HepG2 (cell line): ENCODE measurements at regions of chr2 and their contacts with region 1.

Region 1: GRCh38 chr2:197777823-197778407 is 7.2 kb downstream of the BOLL start:
- DNase-seq: peak; percentile 28
- ATAC-seq: no peak
- H3K4me3 ChIP-seq: no peak overlapping the region
- H3K27ac ChIP-seq: no peak overlapping the region
- H3K4me1 ChIP-seq: no peaks in the 10 kb centered on the region
- H3K27me3 ChIP-seq: no peaks in the 10 kb centered on the region
- CTCF ChIP-seq: peak; percentile 75
- EP300 ChIP-seq: no peak
- POLR2A ChIP-seq: no peak
- RAD21 ChIP-seq: peak; percentile 68

Region 2: GRCh38 chr2:197011799-197012641 is 765.9 kb before region 1 on chr2:
- CTCF ChIA-PET with region 1: no interaction called
- POLR2A ChIA-PET with region 1: no interaction called
- in situ Hi-C with region 1: no loop called
- intact Hi-C with region 1: loop called (anchors 10 kb)
- DNase-seq: peak; percentile 57
- ATAC-seq: peak; percentile 97
- H3K4me3 ChIP-seq: no peak overlapping the region
- H3K27ac ChIP-seq: no peak overlapping the region
- H3K4me1 ChIP-seq: no peaks in the 10 kb centered on the region
- H3K27me3 ChIP-seq: peaks cover 0 to 8% of the 10 kb centered on the region in 2 experiments; a peak in 2 of 5 replicates
- CTCF ChIP-seq: peak; percentile 83
- EP300 ChIP-seq: no peak
- POLR2A ChIP-seq: no peak
- RAD21 ChIP-seq: peak; percentile 41; the same call in 1 of the 2 replicates

Region 3: GRCh38 chr2:197191177-197191939 is 586.6 kb before region 1 on chr2:
- CTCF ChIA-PET with region 1: interaction called, 14 read pairs
- POLR2A ChIA-PET with region 1: no interaction called
- in situ Hi-C with region 1: loop called (anchors 10 kb)
- intact Hi-C with region 1: loop called (anchors 1 kb)
- DNase-seq: peak; percentile 40
- ATAC-seq: peak; percentile 60; the same call in 2 of the 3 replicates
- H3K4me3 ChIP-seq: no peak overlapping the region
- H3K27ac ChIP-seq: no peak overlapping the region
- H3K4me1 ChIP-seq: no peaks in the 10 kb centered on the region
- H3K27me3 ChIP-seq: no peaks in the 10 kb centered on the region
- CTCF ChIP-seq: peak; percentile 66
- EP300 ChIP-seq: no peak
- POLR2A ChIP-seq: no peak
- RAD21 ChIP-seq: no peak

Region 4: GRCh38 chr2:197383823-197384222 is 394.1 kb before region 1 on chr2:
- CTCF ChIA-PET with region 1: no interaction called
- POLR2A ChIA-PET with region 1: no interaction called
- in situ Hi-C with region 1: loop called (anchors 10 kb)
- intact Hi-C with region 1: loop called (anchors 2 kb)
- DNase-seq: no peak
- ATAC-seq: peak; percentile 57
- H3K4me3 ChIP-seq: no peak overlapping the region
- H3K27ac ChIP-seq: no peak overlapping the region
- H3K4me1 ChIP-seq: 0 out of 2 replicates have a peak, but pooled peaks cover 2% of the 10 kb centered on the region
- H3K27me3 ChIP-seq: peaks cover 0 to 11% of the 10 kb centered on the region in 2 experiments; a peak in 1 of 5 replicates
- CTCF ChIP-seq: peak; percentile 60
- EP300 ChIP-seq: no peak
- POLR2A ChIP-seq: no peak
- RAD21 ChIP-seq: no peak

Region 5: DNA sequence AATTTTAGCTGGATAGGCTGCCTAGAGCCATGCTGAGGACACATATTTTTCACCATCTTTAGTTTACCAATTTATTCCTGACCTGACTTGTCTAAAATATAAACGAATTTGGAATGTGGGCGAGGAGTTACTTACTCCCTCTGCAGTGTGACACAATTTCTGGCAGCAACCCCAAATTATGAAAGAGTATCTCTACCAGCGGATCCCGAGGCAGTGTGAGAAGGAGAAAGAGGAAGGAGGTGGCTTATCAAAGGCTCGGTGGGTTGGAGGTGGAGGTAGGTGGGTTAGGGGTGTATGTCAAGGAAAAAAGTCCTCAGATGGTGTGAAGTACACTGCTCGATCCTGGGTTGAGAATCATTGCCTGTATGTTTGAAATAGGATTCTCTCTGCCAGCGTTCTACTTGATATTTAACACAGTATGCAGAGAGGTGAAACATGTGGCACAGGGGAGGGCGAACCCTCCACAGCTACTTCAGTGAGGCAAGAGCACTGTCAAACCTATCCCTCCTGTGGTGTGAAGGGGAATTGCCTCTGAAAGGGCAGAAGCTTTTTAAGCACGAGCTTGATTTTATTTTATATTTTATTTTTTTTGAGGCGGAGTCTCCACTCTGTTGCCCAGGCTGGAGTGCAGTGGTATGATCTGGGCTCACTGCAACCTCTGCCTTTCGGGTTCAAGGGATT is 178.5 kb before region 1 on chr2:
- CTCF ChIA-PET with region 1: no interaction called
- POLR2A ChIA-PET with region 1: no interaction called
- in situ Hi-C with region 1: no loop called
- intact Hi-C with region 1: loop called (anchors 2 kb)
- DNase-seq: peak; percentile 69
- ATAC-seq: peak; percentile 97
- H3K4me3 ChIP-seq: peak overlapping the region in 1 of 3 experiments; percentile 14; a peak in 1 of 6 replicates
- H3K27ac ChIP-seq: no peak overlapping the region
- H3K4me1 ChIP-seq: peaks cover 23% of the 10 kb centered on the region
- H3K27me3 ChIP-seq: peaks cover 0 to 17% of the 10 kb centered on the region in 2 experiments; a peak in 2 of 5 replicates
- CTCF ChIP-seq: peak; percentile 52
- EP300 ChIP-seq: no peak
- POLR2A ChIP-seq: no peak
- RAD21 ChIP-seq: no peak